B cell (primary cell): ENCODE measurements at regions of chr7 and their contacts with region 1.

Region 1: DNA sequence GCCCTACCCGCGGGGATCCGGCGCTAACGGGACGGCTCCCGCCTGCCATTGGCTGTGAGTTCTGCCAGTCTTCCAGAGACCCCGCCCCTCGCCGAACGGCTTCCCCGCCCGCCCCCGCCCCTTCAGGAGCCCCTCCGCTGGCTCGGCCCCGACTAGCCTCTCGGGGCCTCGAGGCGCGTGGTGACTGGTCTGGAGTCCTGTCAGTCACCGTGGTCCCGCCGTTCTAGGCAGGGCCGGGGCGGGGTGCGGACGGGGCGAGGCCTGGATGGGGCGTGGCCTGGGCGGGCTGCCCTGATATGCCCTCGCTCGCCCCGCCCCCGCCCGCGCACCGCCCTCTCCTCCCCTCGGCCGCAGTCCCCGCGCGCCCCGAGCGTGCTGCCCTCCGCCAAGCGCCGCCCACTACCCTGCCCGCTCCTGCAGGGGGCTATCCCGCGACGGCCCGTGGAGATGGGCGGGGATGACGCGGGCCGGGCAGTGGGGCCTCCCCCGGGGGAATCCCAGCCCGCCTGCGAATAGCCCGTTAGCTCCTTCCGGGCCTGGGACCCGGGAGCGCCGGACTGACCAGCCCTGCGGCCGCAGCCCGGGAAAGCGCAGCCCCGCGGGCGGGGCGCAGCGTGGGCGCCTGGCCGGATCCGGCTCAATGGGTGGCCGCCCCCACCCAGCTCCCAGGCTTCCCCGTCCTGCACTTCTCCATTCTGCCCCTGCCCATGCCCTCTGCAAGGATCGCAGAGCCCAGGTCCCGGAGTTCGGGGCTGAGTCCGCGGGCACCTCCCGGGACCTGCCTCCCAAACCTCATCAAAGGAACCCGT is 450 bp upstream of the HIP1 start:
- DNase-seq: peak; percentile 99
- ATAC-seq: peak; percentile 87
- H3K4me3 ChIP-seq: peak overlapping the region; percentile 58 to 97 (median 91)
- H3K4me3 Mint-ChIP-seq: peak overlapping the region; percentile 94
- H3K27ac ChIP-seq: peak overlapping the region; percentile 81 to 95
- H3K27ac Mint-ChIP-seq: peak overlapping the region; percentile 97
- H3K4me1 ChIP-seq: peaks cover 31 to 38% of the 10 kb centered on the region in 2 donors
- H3K4me1 Mint-ChIP-seq: peaks cover 34% of the 10 kb centered on the region
- H3K27me3 ChIP-seq: no peaks in the 10 kb centered on the region
- H3K27me3 Mint-ChIP-seq: no peaks in the 10 kb centered on the region
- CTCF ChIP-seq: no peak

Region 2: DNA sequence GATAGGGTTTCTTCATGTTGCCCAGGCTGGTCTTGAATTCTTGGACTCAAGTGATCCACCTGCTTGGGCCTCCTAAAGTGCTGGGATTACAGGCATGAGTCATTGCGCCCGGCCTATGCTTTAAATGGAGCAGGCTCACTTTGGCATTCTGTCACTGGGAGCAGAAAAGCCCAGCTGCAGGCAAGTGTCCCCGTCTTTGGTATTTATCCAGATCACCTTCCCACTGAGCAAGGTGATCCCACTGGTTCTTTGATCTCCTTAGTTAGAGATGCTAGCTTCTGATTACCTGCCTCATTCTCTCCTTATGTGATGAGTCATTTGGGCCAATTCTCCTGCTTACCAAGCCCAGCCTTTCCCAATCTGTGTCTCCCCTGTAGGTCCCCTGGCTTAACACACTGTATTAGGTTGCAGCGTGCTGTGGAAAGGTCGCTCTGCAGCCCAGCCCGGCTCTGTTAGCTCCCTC is 207.8 kb before region 1 on chr7:
- CTCF ChIA-PET with region 1: no interaction called
- POLR2A ChIA-PET with region 1: no interaction called
- intact Hi-C with region 1: loop called (anchors 1 kb)
- DNase-seq: no peak
- ATAC-seq: no peak
- H3K4me3 ChIP-seq: no peak overlapping the region
- H3K4me3 Mint-ChIP-seq: no peak overlapping the region
- H3K27ac ChIP-seq: no peak overlapping the region
- H3K27ac Mint-ChIP-seq: no peak overlapping the region
- H3K4me1 ChIP-seq: peaks cover 12 to 14% of the 10 kb centered on the region in 2 donors
- H3K4me1 Mint-ChIP-seq: peaks cover 23% of the 10 kb centered on the region
- H3K27me3 ChIP-seq: no peaks in the 10 kb centered on the region
- H3K27me3 Mint-ChIP-seq: no peaks in the 10 kb centered on the region
- CTCF ChIP-seq: no peak

Region 3: GRCh38 chr7:75662579-75663301 is 76.5 kb before region 1 on chr7:
- CTCF ChIA-PET with region 1: interaction called, 3 read pairs
- POLR2A ChIA-PET with region 1: interaction called, 5 read pairs
- intact Hi-C with region 1: loop called (anchors 2 kb)
- DNase-seq: peak; percentile 83
- ATAC-seq: peak; percentile 86
- H3K4me3 ChIP-seq: peak overlapping the region in 2 of 5 experiments; percentile 13 to 50
- H3K4me3 Mint-ChIP-seq: peak overlapping the region; percentile 70
- H3K27ac ChIP-seq: peak overlapping the region; percentile 49 to 60
- H3K27ac Mint-ChIP-seq: peak overlapping the region; percentile 86
- H3K4me1 ChIP-seq: peaks cover 18 to 22% of the 10 kb centered on the region in 2 donors
- H3K4me1 Mint-ChIP-seq: peaks cover 26% of the 10 kb centered on the region
- H3K27me3 ChIP-seq: no peaks in the 10 kb centered on the region
- H3K27me3 Mint-ChIP-seq: no peaks in the 10 kb centered on the region
- CTCF ChIP-seq: no peak

Region 4: GRCh38 chr7:75878769-75879611 is 139.8 kb after region 1 on chr7 and contains the start of gene RHBDD2:
- CTCF ChIA-PET with region 1: no interaction called
- POLR2A ChIA-PET with region 1: no interaction called
- intact Hi-C with region 1: loop called (anchors 2 kb)
- DNase-seq: peak; percentile 95
- ATAC-seq: peak; percentile 98
- H3K4me3 ChIP-seq: peak within 1 kb of the TSS; percentile 59 to 97 (median 81)
- H3K4me3 Mint-ChIP-seq: peak within 1 kb of the TSS; percentile 90
- H3K27ac ChIP-seq: peak within 1 kb of the TSS; percentile 66 to 87
- H3K27ac Mint-ChIP-seq: peak within 1 kb of the TSS; percentile 98
- H3K4me1 ChIP-seq: peaks cover 18 to 20% of the 10 kb centered on the region in 2 donors
- H3K4me1 Mint-ChIP-seq: peaks cover 26% of the 10 kb centered on the region
- H3K27me3 ChIP-seq: no peaks in the 10 kb centered on the region
- H3K27me3 Mint-ChIP-seq: no peaks in the 10 kb centered on the region
- CTCF ChIP-seq: peak; percentile 11
- total RNA-seq, gene RHBDD2: 31.6 and 34.1 TPM in 2 replicates

Region 5: GRCh38 chr7:76512941-76513816 is 774.0 kb after region 1 on chr7:
- CTCF ChIA-PET with region 1: no interaction called
- POLR2A ChIA-PET with region 1: no interaction called
- intact Hi-C with region 1: no loop called
- DNase-seq: peak; percentile 8
- ATAC-seq: no peak
- H3K4me3 ChIP-seq: no peak overlapping the region
- H3K4me3 Mint-ChIP-seq: no peak overlapping the region
- H3K27ac ChIP-seq: no peak overlapping the region
- H3K27ac Mint-ChIP-seq: no peak overlapping the region
- H3K4me1 ChIP-seq: peaks cover 0 to 3% of the 10 kb centered on the region in 2 donors
- H3K4me1 Mint-ChIP-seq: no peaks in the 10 kb centered on the region
- H3K27me3 ChIP-seq: peaks cover 0 to 4% (median 0%) of the 10 kb centered on the region in 4 experiments
- H3K27me3 Mint-ChIP-seq: no peaks in the 10 kb centered on the region
- CTCF ChIP-seq: no peak